Breast epithelium (tissue), 4 donors: ENCODE measurements at regions of chrX and their contacts with region 1.

Region 1: DNA sequence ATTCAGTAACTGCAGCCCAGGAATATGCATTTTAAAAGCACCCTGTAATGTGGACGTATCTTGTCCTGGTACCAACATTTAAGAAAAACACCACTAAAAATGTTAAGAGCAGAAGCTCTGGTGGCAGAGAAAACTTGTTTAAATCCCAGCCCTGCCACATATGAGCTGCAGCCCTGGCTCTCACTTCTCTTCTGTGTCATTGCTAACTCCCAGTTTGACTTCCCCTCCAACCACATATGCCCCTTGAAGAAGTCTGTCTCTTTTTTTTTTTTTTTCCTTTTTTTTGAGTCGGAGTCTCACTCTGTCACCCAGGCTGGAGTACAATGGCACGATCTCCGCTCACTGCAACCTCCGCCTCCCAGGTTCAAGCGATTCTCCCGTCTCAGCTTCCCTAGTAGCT is 14.8 kb downstream of the LHFPL1 start:
- DNase-seq: no peak
- H3K4me3 ChIP-seq: no peak overlapping the region
- H3K27ac ChIP-seq: no peak overlapping the region
- H3K4me1 ChIP-seq: no peaks in the 10 kb centered on the region
- H3K27me3 ChIP-seq: peaks cover 0 to 43% of the 10 kb centered on the region in 2 donors
- CTCF ChIP-seq: no peak
- POLR2A ChIP-seq: no peak

Region 2: DNA sequence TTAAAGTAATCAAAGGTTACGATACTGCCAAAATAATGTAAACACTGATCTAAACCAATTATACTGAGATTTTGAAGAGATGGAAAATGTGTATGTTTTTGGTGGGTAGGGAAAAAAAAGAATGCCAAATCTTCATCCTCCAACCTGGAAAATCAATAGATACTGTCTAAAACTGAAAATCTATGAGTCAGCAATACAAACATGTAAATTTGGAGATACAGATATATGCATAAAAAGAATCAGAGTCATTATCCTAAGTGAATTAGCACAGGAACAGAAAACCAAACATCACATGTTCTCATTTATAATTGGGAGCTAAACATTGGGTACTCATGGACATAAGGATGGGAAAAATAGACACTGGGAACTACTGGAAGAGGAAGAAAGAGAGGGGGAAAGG is 385.0 kb before region 1 on chrX:
- intact Hi-C with region 1: loop called (anchors 5 kb)
- DNase-seq: no peak
- H3K4me3 ChIP-seq: no peak overlapping the region
- H3K27ac ChIP-seq: no peak overlapping the region
- H3K4me1 ChIP-seq: no peaks in the 10 kb centered on the region
- H3K27me3 ChIP-seq: peaks cover 0 to 15% of the 10 kb centered on the region in 2 donors
- CTCF ChIP-seq: no peak
- POLR2A ChIP-seq: no peak

Region 3: GRCh38 chrX:112587194-112587593 is 77.7 kb before region 1 on chrX:
- intact Hi-C with region 1: no loop called
- DNase-seq: no peak
- H3K4me3 ChIP-seq: no peak overlapping the region
- H3K27ac ChIP-seq: no peak overlapping the region
- H3K4me1 ChIP-seq: no peaks in the 10 kb centered on the region
- H3K27me3 ChIP-seq: peaks cover 0 to 19% of the 10 kb centered on the region in 2 donors
- CTCF ChIP-seq: no peak
- POLR2A ChIP-seq: no peak

Region 4: GRCh38 chrX:112678831-112679230 is 13.9 kb after region 1 on chrX:
- intact Hi-C with region 1: no loop called
- DNase-seq: no peak
- H3K4me3 ChIP-seq: peak overlapping the region in 1 of 3 donors; percentile 63
- H3K27ac ChIP-seq: peak overlapping the region in 1 of 2 donors; percentile 64
- H3K4me1 ChIP-seq: no peaks in the 10 kb centered on the region
- H3K27me3 ChIP-seq: peaks cover 0 to 23% of the 10 kb centered on the region in 2 donors
- CTCF ChIP-seq: no peak
- POLR2A ChIP-seq: no peak